ENCODE measurements at regions of chr4 and their contacts with region 1.

Region 1: GRCh38 chr4:174859904-174860303 is 30.9 kb upstream of the GLRA3 start:
- DNase-seq: no peak
- H3K4me3 ChIP-seq: no peak overlapping the region
- CTCF ChIP-seq: no peak
- POLR2A ChIP-seq: no peak

Region 2: GRCh38 chr4:174292473-174292872 is 567.4 kb before region 1 on chr4:
- intact Hi-C with region 1: no loop called
- DNase-seq: no peak
- H3K4me3 ChIP-seq: no peak overlapping the region
- CTCF ChIP-seq: no peak
- POLR2A ChIP-seq: no peak

Region 3: DNA sequence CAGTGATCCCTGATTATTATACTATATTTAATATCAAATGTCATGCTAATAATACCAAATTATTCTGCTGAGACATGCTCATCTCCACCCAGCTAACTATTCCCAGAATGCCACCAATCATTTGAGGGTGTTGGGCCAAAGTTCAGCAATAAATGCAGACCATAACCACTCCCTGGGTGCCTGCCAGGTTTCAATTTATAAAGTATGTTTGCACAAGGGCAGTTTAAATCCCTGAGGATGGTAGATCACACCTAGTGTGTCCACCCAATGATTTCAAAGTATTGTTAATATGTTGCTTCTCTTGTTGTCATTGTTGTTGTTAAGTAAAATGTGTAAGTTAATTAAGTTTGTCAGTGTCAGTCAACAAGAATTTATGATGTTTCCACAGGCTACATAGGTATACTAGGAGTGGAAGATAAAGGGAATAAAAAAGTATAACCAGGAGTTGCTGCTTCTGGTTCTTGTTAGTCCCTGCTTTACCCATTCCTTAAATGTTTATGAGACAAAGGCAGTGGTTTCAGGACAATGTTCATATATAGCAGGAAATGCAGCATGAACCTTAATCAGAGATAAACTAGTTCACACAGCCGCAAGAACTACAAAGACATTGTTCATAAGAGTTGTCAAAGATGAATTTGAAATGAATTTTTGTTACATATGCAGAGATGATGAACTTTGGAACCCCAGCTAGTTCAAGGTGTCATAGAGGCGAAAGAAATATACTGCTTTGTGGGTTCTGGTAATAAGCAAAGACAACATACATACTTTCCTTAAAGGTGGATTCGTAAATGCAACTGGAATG is 363.1 kb before region 1 on chr4:
- intact Hi-C with region 1: no loop called
- DNase-seq: no peak
- H3K4me3 ChIP-seq: no peak overlapping the region
- CTCF ChIP-seq: no peak
- POLR2A ChIP-seq: no peak

Region 4: GRCh38 chr4:176034499-176034898 is 1174.6 kb after region 1 on chr4:
- intact Hi-C with region 1: loop called (anchors 5 kb)
- DNase-seq: peak in 1 of 2 donors; percentile 21
- H3K4me3 ChIP-seq: no peak overlapping the region
- CTCF ChIP-seq: no peak
- POLR2A ChIP-seq: no peak

Measured in lower leg skin (tissue), 4 donors.